Activated CD4-positive, alpha-beta memory T cell treated with anti-CD3 and anti-CD28 coated beads for 36 hours (primary cell): ENCODE measurements at regions of chr4 and their contacts with region 1.

Region 1: GRCh38 chr4:108030332-108030731 is 40.6 kb downstream of the HADH start:
- DNase-seq: peak; percentile 86
- H3K4me3 Mint-ChIP-seq: no peak overlapping the region
- H3K27ac Mint-ChIP-seq: peak overlapping the region; percentile 82
- H3K4me1 Mint-ChIP-seq: peaks cover 50% of the 10 kb centered on the region
- H3K27me3 Mint-ChIP-seq: no peaks in the 10 kb centered on the region

Region 2: GRCh38 chr4:107719922-107720722 is 310.2 kb before region 1 on chr4 and contains the start of gene PAPSS1:
- CTCF ChIA-PET with region 1: no interaction called
- POLR2A ChIA-PET with region 1: no interaction called
- intact Hi-C with region 1: loop called (anchors 2 kb)
- DNase-seq: peak; percentile 96
- H3K4me3 Mint-ChIP-seq: peak within 1 kb of the TSS; percentile 88
- H3K27ac Mint-ChIP-seq: peak within 1 kb of the TSS; percentile 84
- H3K4me1 Mint-ChIP-seq: peaks cover 26% of the 10 kb centered on the region
- H3K27me3 Mint-ChIP-seq: no peaks in the 10 kb centered on the region
- total RNA-seq, gene PAPSS1: 33.0 to 34.9 TPM

Region 3: DNA sequence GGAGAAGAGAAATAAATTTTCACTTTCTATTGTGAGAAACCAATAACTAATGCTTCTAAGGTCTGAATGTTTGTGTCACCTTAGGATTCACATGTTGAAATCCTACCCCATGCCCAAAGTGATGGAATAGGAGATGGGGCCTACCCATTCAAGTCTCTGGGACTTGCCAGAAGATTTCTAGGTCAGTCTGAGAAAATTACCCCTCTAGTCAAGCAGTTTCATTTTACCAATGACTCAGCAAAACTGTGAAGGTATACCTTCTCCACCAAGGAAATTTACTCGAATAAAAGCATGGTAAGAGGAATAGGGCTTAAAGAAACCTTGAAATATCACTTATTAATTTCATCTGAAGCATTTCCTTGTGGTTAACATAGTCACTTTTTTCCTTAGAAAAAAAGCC is 286.8 kb before region 1 on chr4:
- CTCF ChIA-PET with region 1: no interaction called
- POLR2A ChIA-PET with region 1: no interaction called
- intact Hi-C with region 1: no loop called
- DNase-seq: no peak
- H3K4me3 Mint-ChIP-seq: no peak overlapping the region
- H3K27ac Mint-ChIP-seq: no peak overlapping the region
- H3K4me1 Mint-ChIP-seq: peaks cover 4% of the 10 kb centered on the region
- H3K27me3 Mint-ChIP-seq: peaks cover 10% of the 10 kb centered on the region

Region 4: GRCh38 chr4:108072300-108072699 is 42.0 kb after region 1 on chr4:
- CTCF ChIA-PET with region 1: interaction called, 3 read pairs
- POLR2A ChIA-PET with region 1: no interaction called
- intact Hi-C with region 1: loop called (anchors 2 kb)
- DNase-seq: peak; percentile 71
- H3K4me3 Mint-ChIP-seq: no peak overlapping the region
- H3K27ac Mint-ChIP-seq: peak overlapping the region; percentile 68
- H3K4me1 Mint-ChIP-seq: peaks cover 74% of the 10 kb centered on the region
- H3K27me3 Mint-ChIP-seq: no peaks in the 10 kb centered on the region

Region 5: DNA sequence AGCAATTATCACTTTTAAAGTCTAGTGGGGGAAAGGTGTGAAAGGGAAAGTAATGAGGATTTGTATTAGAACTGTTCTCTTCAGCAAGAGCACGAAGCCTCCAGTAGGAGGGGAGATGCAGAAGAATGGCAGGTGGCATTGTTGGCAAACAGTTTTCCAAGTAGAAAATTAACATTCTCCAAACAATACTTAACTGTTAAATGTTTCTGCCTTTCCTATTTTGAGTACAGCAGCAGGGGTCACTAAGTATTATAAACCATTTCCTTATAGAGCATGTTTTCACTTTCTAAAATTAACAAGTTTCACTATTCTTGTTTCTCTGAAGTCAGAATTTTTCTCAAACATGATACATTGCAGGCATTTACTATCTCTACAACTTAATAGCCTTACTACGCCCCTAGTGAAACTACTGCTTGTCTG is 79.7 kb after region 1 on chr4:
- CTCF ChIA-PET with region 1: interaction called, 6 read pairs
- POLR2A ChIA-PET with region 1: interaction called, 3 read pairs
- intact Hi-C with region 1: loop called (anchors 2 kb)
- DNase-seq: no peak
- H3K4me3 Mint-ChIP-seq: peak overlapping the region; percentile 9
- H3K27ac Mint-ChIP-seq: peak overlapping the region; percentile 68
- H3K4me1 Mint-ChIP-seq: peaks cover 91% of the 10 kb centered on the region
- H3K27me3 Mint-ChIP-seq: no peaks in the 10 kb centered on the region

Region 6: GRCh38 chr4:108172753-108173598 is 142.6 kb after region 1 on chr4:
- CTCF ChIA-PET with region 1: interaction called, 19 read pairs
- POLR2A ChIA-PET with region 1: interaction called, 16 read pairs
- intact Hi-C with region 1: loop called (anchors 2 kb)
- DNase-seq: peak; percentile 76
- H3K4me3 Mint-ChIP-seq: peak overlapping the region; percentile 85
- H3K27ac Mint-ChIP-seq: peak overlapping the region; percentile 87
- H3K4me1 Mint-ChIP-seq: peaks cover 40% of the 10 kb centered on the region
- H3K27me3 Mint-ChIP-seq: peaks cover 9% of the 10 kb centered on the region

Region 7: GRCh38 chr4:108204518-108204917 is 174.2 kb after region 1 on chr4:
- CTCF ChIA-PET with region 1: no interaction called
- POLR2A ChIA-PET with region 1: no interaction called
- intact Hi-C with region 1: no loop called
- DNase-seq: no peak
- H3K4me3 Mint-ChIP-seq: no peak overlapping the region
- H3K27ac Mint-ChIP-seq: no peak overlapping the region
- H3K4me1 Mint-ChIP-seq: peaks cover 19% of the 10 kb centered on the region
- H3K27me3 Mint-ChIP-seq: no peaks in the 10 kb centered on the region

Region 8: DNA sequence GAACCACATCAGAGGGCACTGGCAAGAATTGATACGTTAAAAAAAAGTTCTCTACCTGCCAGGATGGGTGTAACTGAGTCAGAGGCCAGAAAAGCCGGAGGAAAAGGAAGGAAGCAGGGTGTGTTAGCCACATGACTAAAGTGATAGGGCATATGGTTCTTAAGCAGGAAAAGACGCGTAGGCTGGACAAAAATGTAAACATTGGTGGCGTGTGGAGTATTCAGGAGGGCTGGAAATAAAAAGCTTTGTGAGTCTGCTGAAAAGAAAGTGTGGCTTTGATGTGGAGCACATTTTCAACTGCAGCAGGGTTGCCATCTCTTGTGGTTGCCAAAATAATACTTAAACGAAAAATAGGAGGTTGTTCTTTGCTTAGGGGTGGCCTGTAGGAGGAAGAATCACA is 403.5 kb after region 1 on chr4:
- CTCF ChIA-PET with region 1: no interaction called
- POLR2A ChIA-PET with region 1: no interaction called
- intact Hi-C with region 1: loop called (anchors 2 kb)
- DNase-seq: peak; percentile 44
- H3K4me3 Mint-ChIP-seq: no peak overlapping the region
- H3K27ac Mint-ChIP-seq: peak overlapping the region; percentile 21
- H3K4me1 Mint-ChIP-seq: peaks cover 37% of the 10 kb centered on the region
- H3K27me3 Mint-ChIP-seq: peaks cover 5% of the 10 kb centered on the region

Region 9: GRCh38 chr4:108570993-108571569 is 540.7 kb after region 1 on chr4:
- CTCF ChIA-PET with region 1: interaction called, 54 read pairs
- POLR2A ChIA-PET with region 1: interaction called, 3 read pairs
- intact Hi-C with region 1: loop called (anchors 1 kb)
- DNase-seq: no peak
- H3K4me3 Mint-ChIP-seq: no peak overlapping the region
- H3K27ac Mint-ChIP-seq: no peak overlapping the region
- H3K4me1 Mint-ChIP-seq: peaks cover 7% of the 10 kb centered on the region
- H3K27me3 Mint-ChIP-seq: no peaks in the 10 kb centered on the region